Calu3 (cell line): ENCODE measurements at regions of chr1 and their contacts with region 1.

Region 1: DNA sequence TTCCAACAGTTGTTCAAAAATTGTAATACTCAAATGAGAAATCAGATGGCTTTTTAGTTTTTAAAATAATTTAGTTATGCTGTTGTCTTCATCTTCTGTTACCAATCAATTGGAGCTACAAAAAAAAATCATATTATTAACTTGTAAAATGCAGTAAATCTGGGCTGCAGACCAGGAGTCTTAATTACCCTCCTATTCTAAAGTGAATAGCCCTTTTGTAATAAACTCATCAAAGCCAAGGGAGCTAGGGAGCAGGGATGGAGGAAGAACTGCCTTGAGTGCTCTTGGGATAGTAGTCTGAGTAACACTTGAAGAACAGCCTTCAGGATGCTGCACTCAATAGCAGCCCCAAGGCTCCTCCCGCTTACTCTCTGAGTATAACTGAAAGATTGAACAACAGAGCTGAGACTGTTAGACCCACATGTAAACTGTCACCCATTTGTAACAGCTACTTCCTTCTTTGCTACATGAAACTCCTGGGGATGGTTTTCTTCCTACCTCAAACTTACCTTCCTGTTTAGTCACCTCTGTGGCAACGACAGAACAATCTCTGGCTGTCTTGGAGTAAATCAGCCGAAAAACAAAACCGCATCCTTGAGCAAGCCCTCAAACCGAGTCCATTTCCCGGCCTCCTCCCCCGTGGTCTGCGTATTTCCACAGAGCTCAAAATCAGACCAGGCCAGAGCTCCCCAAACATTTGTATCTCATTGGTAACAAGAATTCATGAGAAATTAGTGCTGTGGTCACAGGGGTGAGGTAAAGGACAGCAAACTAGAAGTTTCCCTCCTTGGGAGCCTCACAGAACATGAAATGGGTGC is 55.9 kb downstream of the CD58 start:
- DNase-seq: peak; percentile 45
- H3K4me3 Mint-ChIP-seq: peak overlapping the region; percentile 20
- H3K27ac Mint-ChIP-seq: peak overlapping the region; percentile 86
- H3K4me1 Mint-ChIP-seq: peaks cover 46% of the 10 kb centered on the region
- H3K27me3 Mint-ChIP-seq: no peaks in the 10 kb centered on the region
- CTCF ChIP-seq: no peak

Region 2: GRCh38 chr1:116553386-116554115 is 38.6 kb after region 1 on chr1:
- CTCF ChIA-PET with region 1: no interaction called
- intact Hi-C with region 1: loop called (anchors 5 kb)
- DNase-seq: peak; percentile 24
- H3K4me3 Mint-ChIP-seq: peak overlapping the region; percentile 3
- H3K27ac Mint-ChIP-seq: peak overlapping the region; percentile 42
- H3K4me1 Mint-ChIP-seq: peaks cover 33% of the 10 kb centered on the region
- H3K27me3 Mint-ChIP-seq: no peaks in the 10 kb centered on the region
- CTCF ChIP-seq: no peak